A673 (cell line): ENCODE measurements at regions of chr12 and their contacts with region 1.

Region 1: DNA sequence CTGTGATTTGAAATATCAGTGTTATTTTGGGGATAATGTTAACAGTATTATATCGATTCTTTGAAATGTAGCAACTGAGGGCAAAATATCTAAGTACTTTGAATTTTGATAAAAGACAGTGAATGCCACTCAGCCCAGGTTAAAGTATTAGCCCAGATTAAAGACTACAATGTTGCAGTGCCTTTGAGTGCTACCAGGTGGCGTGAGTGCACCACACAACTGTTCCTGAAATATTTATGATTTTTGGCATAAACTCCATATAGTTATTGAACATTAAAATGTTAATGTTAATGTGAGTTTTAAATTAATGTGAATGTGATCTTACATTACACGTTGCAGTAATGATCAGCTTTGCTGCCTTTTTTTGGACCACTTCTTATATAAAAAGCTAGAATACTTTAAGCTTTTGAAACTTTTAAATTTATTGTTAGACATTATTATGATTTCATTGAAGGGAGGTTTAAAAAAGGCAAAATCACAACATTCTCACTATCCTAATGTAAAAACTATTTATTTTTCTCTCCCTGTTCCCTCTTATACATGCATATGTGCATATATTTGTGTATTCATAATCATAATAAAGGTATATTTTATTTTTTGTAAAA is 22.5 kb downstream of the MRPS35 start:
- DNase-seq: peak; percentile 45
- H3K4me3 ChIP-seq: no peak overlapping the region
- H3K27ac ChIP-seq: no peak overlapping the region
- H3K4me1 ChIP-seq: no peaks in the 10 kb centered on the region
- H3K27me3 ChIP-seq: no peaks in the 10 kb centered on the region
- CTCF ChIP-seq: peak; percentile 86

Region 2: DNA sequence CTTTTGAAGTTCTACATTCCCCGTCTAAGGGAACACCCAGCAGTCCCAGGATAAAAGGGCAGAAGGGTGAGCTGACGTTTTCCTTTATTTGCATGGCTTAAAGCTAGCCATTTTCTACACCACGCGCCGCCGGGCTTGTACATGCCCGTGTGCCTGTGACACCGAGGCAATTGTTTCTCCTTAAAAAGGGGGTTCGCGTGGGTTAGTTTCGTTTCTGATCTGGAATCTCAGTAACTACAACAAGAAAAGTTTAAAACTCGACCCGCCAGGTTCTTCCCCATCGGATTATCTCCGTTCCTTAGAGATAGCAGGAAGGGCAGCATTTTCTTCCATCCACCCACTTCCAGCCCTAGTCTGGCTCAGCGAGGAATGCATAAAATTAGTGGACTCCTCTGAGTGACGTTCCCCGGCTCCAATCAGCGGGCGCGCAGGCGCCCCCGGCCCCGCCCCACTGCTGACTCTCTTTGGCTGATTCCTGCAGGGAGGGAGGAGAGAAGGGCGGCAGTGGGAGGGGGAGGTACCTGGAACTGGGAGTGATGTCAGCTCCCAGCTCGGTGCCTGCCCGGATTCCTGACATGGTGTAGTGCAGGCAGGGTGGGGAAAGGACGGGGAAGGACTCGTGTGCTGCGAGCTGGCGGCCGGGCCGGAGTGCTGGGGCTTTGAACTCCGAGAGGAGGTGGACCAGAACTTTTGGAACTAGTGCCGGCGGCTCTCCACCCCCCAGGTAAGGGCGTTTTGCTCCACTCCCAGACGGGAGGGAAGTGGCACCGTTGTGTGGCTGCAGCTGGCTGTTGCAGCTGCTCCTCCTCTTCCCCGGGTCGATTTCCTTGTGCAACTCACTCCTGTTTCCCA is 209.3 kb before region 1 on chr12 and contains the start of gene PPFIBP1:
- CTCF ChIA-PET with region 1: no interaction called
- POLR2A ChIA-PET with region 1: no interaction called
- intact Hi-C with region 1: no loop called
- DNase-seq: peak; percentile 99
- H3K4me3 ChIP-seq: peak within 1 kb of the TSS; percentile 69
- H3K27ac ChIP-seq: peak within 1 kb of the TSS; percentile 72
- H3K4me1 ChIP-seq: peaks cover 34% of the 10 kb centered on the region
- H3K27me3 ChIP-seq: no peaks in the 10 kb centered on the region
- CTCF ChIP-seq: 0 out of 2 replicates have a peak, but pooled peaks have one; percentile 17
- total RNA-seq, gene PPFIBP1: 41.2 and 49.1 TPM in 2 replicates

Region 3: DNA sequence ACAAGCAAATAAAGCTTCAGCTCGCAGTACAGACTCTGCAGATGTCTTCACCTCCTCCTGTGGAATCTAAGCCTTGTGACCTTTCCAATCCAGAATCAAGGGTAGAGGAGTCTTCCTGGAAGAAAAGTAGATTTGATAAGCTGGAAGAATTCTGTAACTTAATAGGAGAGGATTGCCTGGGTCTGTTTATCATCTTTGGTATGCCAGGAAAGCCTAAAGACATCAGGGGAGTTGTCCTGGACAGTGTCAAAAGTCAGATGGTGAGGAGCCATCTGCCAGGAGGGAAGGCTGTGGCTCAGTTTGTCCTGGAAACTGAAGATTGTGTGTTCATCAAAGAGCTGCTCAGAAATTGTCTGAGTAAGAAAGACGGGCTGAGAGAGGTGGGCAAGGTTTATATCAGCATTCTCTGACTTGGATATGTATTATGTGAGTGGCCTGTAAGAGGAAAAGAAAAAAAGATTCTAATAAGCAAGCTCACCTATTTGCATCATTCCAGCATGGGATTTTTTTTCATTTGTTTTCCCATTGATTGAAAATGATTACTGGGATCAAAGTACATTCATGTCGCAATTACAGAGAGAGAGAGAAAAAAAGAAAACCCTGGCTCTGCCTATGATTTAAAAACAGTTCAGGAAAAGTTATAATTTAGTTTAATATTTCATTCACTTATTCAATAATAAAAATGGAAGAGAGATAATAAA is 36.1 kb before region 1 on chr12:
- CTCF ChIA-PET with region 1: no interaction called
- POLR2A ChIA-PET with region 1: no interaction called
- intact Hi-C with region 1: no loop called
- DNase-seq: no peak
- H3K4me3 ChIP-seq: no peak overlapping the region
- H3K27ac ChIP-seq: no peak overlapping the region
- H3K4me1 ChIP-seq: no peaks in the 10 kb centered on the region
- H3K27me3 ChIP-seq: no peaks in the 10 kb centered on the region
- CTCF ChIP-seq: no peak

Region 4: DNA sequence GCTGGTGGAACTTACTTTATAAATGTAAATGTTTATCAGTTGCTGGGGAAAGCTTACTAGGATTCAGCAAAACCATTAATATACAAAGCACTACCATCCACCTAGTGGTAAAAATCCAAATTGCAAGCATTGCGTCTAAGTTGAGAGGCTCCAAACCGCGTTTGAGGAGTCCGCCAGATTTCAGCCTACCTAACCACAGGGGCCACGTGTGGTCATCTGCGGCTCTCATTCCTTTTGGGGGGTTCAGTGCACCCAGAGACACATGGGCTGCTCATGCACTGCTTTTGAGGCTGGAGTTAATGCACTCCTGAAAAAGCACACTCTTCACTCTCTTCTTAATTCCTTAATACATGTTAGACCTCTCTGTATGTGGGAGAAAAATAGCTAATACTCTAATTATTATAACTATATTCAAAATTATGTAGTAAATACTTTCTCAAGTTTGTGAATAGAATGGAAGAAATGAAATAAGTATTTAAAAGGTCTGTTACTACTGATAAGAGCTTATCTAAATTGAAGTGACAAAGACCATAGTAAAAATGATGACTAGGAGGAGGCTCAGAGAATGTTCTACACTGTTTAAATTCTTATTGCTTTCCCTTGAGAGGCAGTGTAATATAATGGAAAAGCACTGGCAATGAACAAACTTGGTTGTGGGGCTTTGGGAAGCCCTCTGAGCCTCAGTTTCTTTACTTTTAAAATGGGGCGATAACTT is 88.3 kb after region 1 on chr12:
- CTCF ChIA-PET with region 1: interaction called, 3 read pairs
- POLR2A ChIA-PET with region 1: no interaction called
- intact Hi-C with region 1: loop called (anchors 1 kb)
- DNase-seq: peak; percentile 78
- H3K4me3 ChIP-seq: peak overlapping the region; percentile 10
- H3K27ac ChIP-seq: no peak overlapping the region
- H3K4me1 ChIP-seq: no peaks in the 10 kb centered on the region
- H3K27me3 ChIP-seq: no peaks in the 10 kb centered on the region
- CTCF ChIP-seq: peak; percentile 80

Region 5: DNA sequence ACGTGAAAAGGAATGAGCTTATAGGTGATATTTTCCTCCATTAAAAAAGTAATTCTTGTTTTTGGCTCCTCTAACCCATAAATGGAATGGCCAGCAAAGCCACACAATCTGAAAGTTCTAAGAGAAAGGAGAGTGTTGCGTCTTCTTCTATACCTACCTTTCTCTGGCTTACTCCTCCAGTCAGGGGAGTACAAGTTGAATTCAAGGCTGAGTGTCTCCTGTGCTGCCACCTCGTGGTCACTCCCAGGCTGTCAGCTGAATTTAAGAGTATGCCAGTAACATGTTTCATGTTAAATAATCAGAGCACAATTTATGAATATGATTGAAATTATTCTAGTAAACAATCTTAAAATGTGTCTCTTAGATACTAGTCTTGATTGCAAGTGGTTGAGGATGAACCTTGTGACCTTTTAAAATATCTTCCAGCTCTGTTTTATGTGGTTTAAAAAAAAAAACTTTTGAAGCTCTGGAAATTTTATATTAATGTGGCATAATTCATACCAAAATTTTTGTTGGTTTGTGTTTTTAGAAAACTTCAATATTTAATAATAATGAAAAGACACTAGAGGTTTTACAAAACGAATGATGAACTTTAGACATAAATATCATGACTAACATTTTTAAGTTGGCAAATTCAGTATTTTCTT is 207.7 kb after region 1 on chr12:
- CTCF ChIA-PET with region 1: no interaction called
- POLR2A ChIA-PET with region 1: no interaction called
- intact Hi-C with region 1: loop called (anchors 1 kb)
- DNase-seq: peak; percentile 75
- H3K4me3 ChIP-seq: no peak overlapping the region
- H3K27ac ChIP-seq: no peak overlapping the region
- H3K4me1 ChIP-seq: no peaks in the 10 kb centered on the region
- H3K27me3 ChIP-seq: no peaks in the 10 kb centered on the region
- CTCF ChIP-seq: peak; percentile 94

Region 6: GRCh38 chr12:28172434-28173030 is 439.4 kb after region 1 on chr12:
- CTCF ChIA-PET with region 1: no interaction called
- POLR2A ChIA-PET with region 1: no interaction called
- intact Hi-C with region 1: loop called (anchors 5 kb)
- DNase-seq: peak; percentile 77
- H3K4me3 ChIP-seq: no peak overlapping the region
- H3K27ac ChIP-seq: no peak overlapping the region
- H3K4me1 ChIP-seq: no peaks in the 10 kb centered on the region
- H3K27me3 ChIP-seq: no peaks in the 10 kb centered on the region
- CTCF ChIP-seq: peak; percentile 79